Right ventricle myocardium inferior (tissue), 1 donor: ENCODE measurements at regions of chr2 and their contacts with region 1.

Region 1: GRCh38 chr2:119311356-119311755 is 55.3 kb downstream of the C2orf76 start:
- DNase-seq: no peak
- ATAC-seq: no peak

Region 2: DNA sequence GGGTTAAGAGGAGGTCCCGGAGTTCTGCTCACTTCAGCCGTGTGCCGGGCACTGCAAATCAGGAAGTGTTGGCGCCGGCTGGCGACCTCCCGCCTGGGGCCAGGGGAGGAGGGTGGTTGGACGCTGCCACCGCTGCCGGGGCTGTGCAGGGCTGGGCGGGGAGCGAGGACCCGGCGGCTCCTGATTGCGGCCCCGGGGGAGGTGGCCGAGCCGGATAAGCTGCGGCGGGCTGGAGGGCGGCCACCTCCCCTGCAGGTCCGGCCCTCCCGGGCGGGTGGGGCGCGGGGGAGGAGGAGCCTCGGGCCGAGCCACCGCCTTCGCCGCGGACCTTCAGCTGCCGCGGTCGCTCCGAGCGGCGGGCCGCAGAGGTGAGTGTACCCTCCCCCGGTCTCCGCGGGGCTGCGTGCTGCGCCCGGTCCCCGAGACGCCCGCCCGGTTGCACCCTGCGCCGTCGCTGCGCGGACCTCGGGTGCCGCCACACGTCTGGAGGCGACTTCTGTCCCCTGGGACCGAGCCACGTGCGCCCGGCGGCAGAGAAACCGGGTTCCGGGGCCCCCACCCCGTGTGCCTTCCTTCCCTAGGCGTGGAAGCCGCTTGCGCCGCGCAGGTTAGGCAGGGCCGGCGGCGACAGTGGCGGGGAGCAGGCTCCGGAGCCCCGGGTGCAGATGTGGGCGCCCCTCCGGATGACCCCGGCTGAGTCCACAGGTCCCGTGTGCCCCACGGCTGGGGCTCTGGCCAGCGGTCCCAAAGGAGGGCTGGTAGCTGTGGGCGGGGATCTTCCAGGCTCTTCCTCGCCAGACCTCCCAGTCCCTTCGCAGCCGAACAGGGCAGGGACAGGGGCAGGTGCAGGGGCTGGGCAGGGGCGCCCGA is 87.6 kb before region 1 on chr2 and contains the start of gene STEAP3:
- intact Hi-C with region 1: loop called (anchors 5 kb)
- DNase-seq: peak; percentile 84
- ATAC-seq: peak; percentile 93
- total RNA-seq, gene STEAP3: 12.9 TPM

Region 3: GRCh38 chr2:119352357-119352756 is 41.0 kb after region 1 on chr2:
- intact Hi-C with region 1: no loop called
- DNase-seq: no peak
- ATAC-seq: peak; percentile 79

Region 4: GRCh38 chr2:119366649-119367471 is 55.5 kb after region 1 on chr2 and contains the starts of genes C2orf76 and DBI:
- intact Hi-C with region 1: loop called (anchors 10 kb)
- DNase-seq: peak; percentile 97
- ATAC-seq: peak; percentile 98
- total RNA-seq, gene C2orf76: 6.8 TPM
- total RNA-seq, gene DBI: 299 TPM

Region 5: DNA sequence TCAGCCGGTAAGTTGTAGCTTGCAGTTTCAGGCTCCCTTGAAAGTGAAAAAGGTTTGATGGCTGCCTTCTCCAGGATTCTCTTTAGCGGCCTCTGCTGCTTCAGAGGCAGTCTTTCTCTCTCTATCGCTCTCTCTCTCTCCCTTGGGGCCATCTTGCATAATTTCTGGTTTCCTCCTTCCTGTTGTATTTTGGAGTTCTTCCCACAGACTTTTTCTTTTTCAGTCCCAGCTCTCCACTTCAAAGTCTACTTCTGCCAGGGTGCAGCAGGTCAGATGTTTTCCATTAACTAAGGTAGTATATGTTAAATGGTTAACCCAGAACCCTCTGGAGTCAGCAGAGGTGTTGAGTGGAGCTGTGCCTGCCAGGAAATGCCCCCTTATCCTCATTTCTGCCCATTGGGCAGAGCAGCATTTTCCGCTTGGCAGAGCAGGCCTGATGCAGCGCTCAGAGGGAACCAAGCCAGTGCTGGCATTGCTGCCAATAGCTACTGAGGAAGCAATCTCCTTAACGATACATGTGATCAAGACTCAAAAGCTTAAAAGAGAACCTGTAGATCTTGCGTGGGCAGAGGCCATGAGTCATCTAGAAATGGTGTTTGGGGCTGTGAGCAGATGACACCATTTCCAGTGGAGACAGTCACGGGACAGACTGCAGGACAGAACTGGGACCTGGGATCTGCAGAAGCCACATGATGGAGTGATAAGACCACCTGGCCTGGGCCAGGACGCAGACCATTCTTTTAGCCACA is 76.2 kb after region 1 on chr2:
- intact Hi-C with region 1: no loop called
- DNase-seq: peak; percentile 81
- ATAC-seq: peak; percentile 85

Region 6: DNA sequence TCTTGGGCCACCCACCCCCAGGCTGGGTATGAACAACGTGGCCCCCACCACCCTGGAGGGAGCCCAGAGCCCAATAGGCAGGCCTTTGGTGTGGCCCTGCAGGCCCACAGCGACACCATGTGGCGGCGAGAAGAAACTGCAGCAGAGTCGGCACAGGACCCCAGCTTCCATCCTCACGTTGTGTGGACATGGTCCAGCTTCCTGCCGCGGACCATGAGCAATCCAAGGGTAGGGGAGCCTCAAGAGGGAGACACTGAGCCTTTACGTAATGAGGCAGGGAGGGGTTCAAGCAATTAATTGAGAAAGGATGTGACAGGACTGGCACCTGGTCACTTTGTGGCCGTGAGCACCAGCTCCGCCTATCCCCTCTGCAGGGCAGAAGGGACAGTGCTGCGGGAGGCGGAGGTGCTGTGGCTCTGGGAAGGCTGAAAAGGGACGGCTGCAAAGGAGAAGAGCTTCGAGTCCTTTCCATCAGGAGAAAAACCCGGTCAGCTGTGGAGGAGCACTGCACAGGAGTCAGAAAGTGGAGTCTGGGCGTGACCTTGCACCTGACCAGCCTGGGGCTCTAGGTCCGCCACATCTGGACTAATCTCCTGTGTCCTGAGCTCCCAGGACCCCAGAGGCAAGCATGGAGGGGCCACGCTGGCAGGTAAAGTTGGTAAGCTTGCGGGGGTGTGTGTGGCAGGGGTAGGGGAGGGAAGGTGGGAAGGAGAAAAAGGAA is 165.1 kb after region 1 on chr2:
- intact Hi-C with region 1: loop called (anchors 2 kb)
- DNase-seq: no peak
- ATAC-seq: peak; percentile 53